Activated CD8-positive, alpha-beta T cell treated with anti-CD3 and anti-CD28 coated beads for 36 hours (primary cell): ENCODE measurements at regions of chr20 and their contacts with region 1.

Region 1: DNA sequence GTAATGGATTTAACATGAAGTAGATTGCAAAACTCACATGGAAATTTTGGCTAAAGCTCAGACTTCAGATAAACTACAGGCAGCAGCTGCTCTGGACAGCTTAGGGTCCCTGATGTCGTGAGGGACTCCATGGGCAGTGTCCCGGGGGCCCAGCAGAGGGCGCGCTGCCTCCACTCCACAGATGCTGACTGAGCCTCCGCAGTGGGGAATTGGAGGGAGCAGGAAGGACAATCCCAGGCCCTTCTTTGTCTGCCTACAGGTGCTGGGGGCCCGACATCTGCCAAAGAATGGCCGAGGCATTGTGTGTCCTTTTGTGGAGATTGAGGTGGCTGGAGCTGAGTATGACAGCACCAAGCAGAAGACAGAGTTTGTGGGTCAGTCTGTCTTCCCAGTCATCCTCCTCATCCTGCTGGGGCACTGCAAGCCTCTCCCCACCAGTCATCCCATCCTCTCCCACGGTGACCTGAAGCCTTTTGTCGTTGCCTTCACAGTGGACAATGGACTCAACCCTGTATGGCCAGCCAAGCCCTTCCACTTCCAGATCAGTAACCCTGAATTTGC is 35.9 kb downstream of the PLCG1 start:
- DNase-seq: peak; percentile 75
- ATAC-seq: peak; percentile 74
- H3K4me3 Mint-ChIP-seq: no peak overlapping the region
- H3K27ac Mint-ChIP-seq: peak overlapping the region; percentile 56
- H3K4me1 Mint-ChIP-seq: peaks cover 25% of the 10 kb centered on the region
- H3K27me3 Mint-ChIP-seq: no peaks in the 10 kb centered on the region
- CTCF ChIP-seq: peak; percentile 83

Region 2: GRCh38 chr20:41149679-41150131 is 23.5 kb before region 1 on chr20:
- CTCF ChIA-PET with region 1: interaction called, 36 read pairs
- POLR2A ChIA-PET with region 1: interaction called, 40 read pairs
- intact Hi-C with region 1: no loop called
- DNase-seq: no peak
- ATAC-seq: peak; percentile 21
- H3K4me3 Mint-ChIP-seq: no peak overlapping the region
- H3K27ac Mint-ChIP-seq: peak overlapping the region; percentile 98
- H3K4me1 Mint-ChIP-seq: peaks cover 94% of the 10 kb centered on the region
- H3K27me3 Mint-ChIP-seq: no peaks in the 10 kb centered on the region
- CTCF ChIP-seq: no peak

Region 3: GRCh38 chr20:41185013-41185757 is 11.9 kb after region 1 on chr20:
- CTCF ChIA-PET with region 1: interaction called, 21 read pairs
- POLR2A ChIA-PET with region 1: interaction called, 4 read pairs
- intact Hi-C with region 1: no loop called
- DNase-seq: no peak
- ATAC-seq: no peak
- H3K4me3 Mint-ChIP-seq: no peak overlapping the region
- H3K27ac Mint-ChIP-seq: no peak overlapping the region
- H3K4me1 Mint-ChIP-seq: peaks cover 14% of the 10 kb centered on the region
- H3K27me3 Mint-ChIP-seq: no peaks in the 10 kb centered on the region
- CTCF ChIP-seq: no peak

Region 4: DNA sequence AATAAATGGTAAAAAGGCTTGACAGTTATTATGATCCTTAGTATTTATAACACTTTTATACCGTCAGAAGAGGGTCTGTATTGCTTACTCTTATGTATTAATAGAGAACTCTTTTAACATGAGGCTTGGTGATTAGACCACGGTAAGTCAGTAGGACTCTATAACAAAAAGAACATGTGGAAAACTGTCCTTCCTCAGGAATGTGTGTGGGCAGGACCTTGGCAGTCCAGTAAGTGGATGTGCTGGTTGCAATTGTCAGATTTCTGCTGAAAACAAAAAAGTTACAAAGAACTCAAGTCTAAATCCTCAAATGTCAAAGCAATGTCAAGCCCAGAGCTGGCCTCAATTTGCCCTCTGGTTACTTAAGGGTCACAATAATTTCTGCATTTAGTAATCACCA is 45.2 kb after region 1 on chr20:
- CTCF ChIA-PET with region 1: interaction called, 14 read pairs
- POLR2A ChIA-PET with region 1: no interaction called
- intact Hi-C with region 1: loop called (anchors 10 kb)
- DNase-seq: no peak
- ATAC-seq: no peak
- H3K4me3 Mint-ChIP-seq: no peak overlapping the region
- H3K27ac Mint-ChIP-seq: no peak overlapping the region
- H3K4me1 Mint-ChIP-seq: peaks cover 7% of the 10 kb centered on the region
- H3K27me3 Mint-ChIP-seq: no peaks in the 10 kb centered on the region
- CTCF ChIP-seq: no peak